Prostate gland (tissue), 2 donors: ENCODE measurements at regions of chr6 and their contacts with region 1.

Region 1: GRCh38 chr6:161370880-161371279 is 97.0 kb upstream of the AGPAT4 start:
- DNase-seq: peak; percentile 47
- H3K4me3 ChIP-seq: no peak overlapping the region
- H3K27ac ChIP-seq: no peak overlapping the region
- H3K4me1 ChIP-seq: peaks cover 6% of the 10 kb centered on the region
- H3K27me3 ChIP-seq: no peaks in the 10 kb centered on the region
- CTCF ChIP-seq: peak; percentile 65 to 88 (median 80)
- POLR2A ChIP-seq: no peak

Region 2: GRCh38 chr6:160733050-160733646 is 637.7 kb before region 1 on chr6:
- intact Hi-C with region 1: loop called (anchors 5 kb)
- DNase-seq: peak; percentile 28
- H3K4me3 ChIP-seq: no peak overlapping the region
- H3K27ac ChIP-seq: no peak overlapping the region
- H3K4me1 ChIP-seq: no peaks in the 10 kb centered on the region
- H3K27me3 ChIP-seq: no peaks in the 10 kb centered on the region
- CTCF ChIP-seq: peak in 3 of 4 experiments; percentile 57 to 63 (median 60)
- POLR2A ChIP-seq: no peak

Region 3: GRCh38 chr6:160930547-160931377 is 440.1 kb before region 1 on chr6:
- intact Hi-C with region 1: loop called (anchors 2 kb)
- DNase-seq: peak; percentile 65
- H3K4me3 ChIP-seq: peak overlapping the region; percentile 43
- H3K27ac ChIP-seq: peak overlapping the region in 1 of 2 donors; percentile 13
- H3K4me1 ChIP-seq: no peaks in the 10 kb centered on the region
- H3K27me3 ChIP-seq: no peaks in the 10 kb centered on the region
- CTCF ChIP-seq: peak; percentile 78 to 93 (median 90)
- POLR2A ChIP-seq: no peak

Region 4: DNA sequence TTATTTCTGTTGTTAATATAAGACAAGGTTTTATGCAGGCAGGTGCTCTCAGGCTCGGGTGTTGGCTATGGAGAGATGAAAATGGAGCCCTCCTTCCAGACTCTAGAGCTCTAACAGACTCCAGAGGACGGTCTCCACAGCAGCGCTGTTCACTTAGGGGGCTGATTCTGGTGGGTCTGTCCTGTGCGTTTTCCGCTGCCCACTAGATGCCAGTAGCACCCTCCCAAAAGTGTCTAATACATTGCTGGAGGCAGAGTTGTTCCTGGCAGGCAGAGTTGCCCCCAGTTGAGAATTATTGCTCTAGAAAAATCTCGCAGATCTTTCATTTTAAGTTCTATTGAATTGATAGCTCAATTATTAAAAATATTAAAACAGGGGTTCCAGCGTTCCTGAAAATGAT is 269.4 kb before region 1 on chr6:
- intact Hi-C with region 1: loop called (anchors 5 kb)
- DNase-seq: no peak
- H3K4me3 ChIP-seq: no peak overlapping the region
- H3K27ac ChIP-seq: no peak overlapping the region
- H3K4me1 ChIP-seq: no peaks in the 10 kb centered on the region
- H3K27me3 ChIP-seq: no peaks in the 10 kb centered on the region
- CTCF ChIP-seq: no peak
- POLR2A ChIP-seq: no peak

Region 5: GRCh38 chr6:161152907-161153662 is 217.8 kb before region 1 on chr6:
- intact Hi-C with region 1: loop called (anchors 5 kb)
- DNase-seq: no peak
- H3K4me3 ChIP-seq: no peak overlapping the region
- H3K27ac ChIP-seq: no peak overlapping the region
- H3K4me1 ChIP-seq: no peaks in the 10 kb centered on the region
- H3K27me3 ChIP-seq: no peaks in the 10 kb centered on the region
- CTCF ChIP-seq: peak in 3 of 4 experiments; percentile 12 to 46 (median 44)
- POLR2A ChIP-seq: no peak